B cell (primary cell): ENCODE measurements at regions of chr18 and their contacts with region 1.

Region 1: GRCh38 chr18:47748847-47749599 is 181.4 kb downstream of the SMAD2 start:
- DNase-seq: peak; percentile 85
- ATAC-seq: peak; percentile 98
- H3K4me3 ChIP-seq: peak overlapping the region in 3 of 5 experiments; percentile 8 to 35 (median 19)
- H3K4me3 Mint-ChIP-seq: peak overlapping the region; percentile 45
- H3K27ac ChIP-seq: no peak overlapping the region
- H3K27ac Mint-ChIP-seq: no peak overlapping the region
- H3K4me1 ChIP-seq: peaks cover 5 to 6% of the 10 kb centered on the region in 2 donors
- H3K4me1 Mint-ChIP-seq: peaks cover 4% of the 10 kb centered on the region
- H3K27me3 ChIP-seq: peaks cover 0 to 13% (median 6%) of the 10 kb centered on the region in 4 experiments
- H3K27me3 Mint-ChIP-seq: peaks cover 15% of the 10 kb centered on the region
- CTCF ChIP-seq: peak; percentile 100

Region 2: DNA sequence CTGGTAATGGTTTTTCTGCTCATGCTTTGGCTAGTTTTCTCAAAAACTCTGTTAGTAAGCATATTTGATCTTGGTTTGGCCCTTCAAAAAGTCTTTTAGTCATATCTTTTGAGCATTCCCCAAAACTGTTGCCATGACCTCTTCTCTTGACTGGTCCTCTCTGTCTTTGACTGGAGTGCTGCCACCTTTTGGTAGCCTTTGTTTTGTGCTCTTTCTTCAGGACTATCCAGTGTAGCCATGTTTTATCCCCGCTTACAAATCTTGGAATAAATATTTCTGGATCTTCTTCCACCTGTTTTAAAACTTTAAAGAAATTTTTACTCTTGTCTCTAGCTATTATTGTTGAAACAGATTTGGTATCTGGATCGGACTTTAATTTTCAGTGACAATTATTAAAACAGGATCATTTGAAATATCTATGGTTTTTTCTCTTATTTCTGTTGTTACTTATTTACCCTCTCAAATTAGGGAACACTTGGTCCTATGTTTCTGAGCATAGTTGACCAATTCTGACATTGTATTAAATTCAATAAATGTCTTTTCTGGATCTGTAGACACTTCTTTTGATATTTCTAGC is 712.6 kb before region 1 on chr18:
- CTCF ChIA-PET with region 1: no interaction called
- POLR2A ChIA-PET with region 1: no interaction called
- intact Hi-C with region 1: no loop called
- DNase-seq: no peak
- ATAC-seq: no peak
- H3K4me3 ChIP-seq: no peak overlapping the region
- H3K4me3 Mint-ChIP-seq: no peak overlapping the region
- H3K27ac ChIP-seq: no peak overlapping the region
- H3K27ac Mint-ChIP-seq: no peak overlapping the region
- H3K4me1 ChIP-seq: no peaks in the 10 kb centered on the region
- H3K4me1 Mint-ChIP-seq: peaks cover 3% of the 10 kb centered on the region
- H3K27me3 ChIP-seq: no peaks in the 10 kb centered on the region
- H3K27me3 Mint-ChIP-seq: peaks cover 10% of the 10 kb centered on the region
- CTCF ChIP-seq: no peak

Region 3: GRCh38 chr18:47100214-47100831 is 648.7 kb before region 1 on chr18:
- CTCF ChIA-PET with region 1: interaction called, 23 read pairs
- POLR2A ChIA-PET with region 1: no interaction called
- intact Hi-C with region 1: no loop called
- DNase-seq: peak; percentile 60
- ATAC-seq: peak; percentile 33
- H3K4me3 ChIP-seq: no peak overlapping the region
- H3K4me3 Mint-ChIP-seq: no peak overlapping the region
- H3K27ac ChIP-seq: no peak overlapping the region
- H3K27ac Mint-ChIP-seq: no peak overlapping the region
- H3K4me1 ChIP-seq: no peaks in the 10 kb centered on the region
- H3K4me1 Mint-ChIP-seq: peaks cover 4% of the 10 kb centered on the region
- H3K27me3 ChIP-seq: no peaks in the 10 kb centered on the region
- H3K27me3 Mint-ChIP-seq: no peaks in the 10 kb centered on the region
- CTCF ChIP-seq: peak; percentile 81

Region 4: DNA sequence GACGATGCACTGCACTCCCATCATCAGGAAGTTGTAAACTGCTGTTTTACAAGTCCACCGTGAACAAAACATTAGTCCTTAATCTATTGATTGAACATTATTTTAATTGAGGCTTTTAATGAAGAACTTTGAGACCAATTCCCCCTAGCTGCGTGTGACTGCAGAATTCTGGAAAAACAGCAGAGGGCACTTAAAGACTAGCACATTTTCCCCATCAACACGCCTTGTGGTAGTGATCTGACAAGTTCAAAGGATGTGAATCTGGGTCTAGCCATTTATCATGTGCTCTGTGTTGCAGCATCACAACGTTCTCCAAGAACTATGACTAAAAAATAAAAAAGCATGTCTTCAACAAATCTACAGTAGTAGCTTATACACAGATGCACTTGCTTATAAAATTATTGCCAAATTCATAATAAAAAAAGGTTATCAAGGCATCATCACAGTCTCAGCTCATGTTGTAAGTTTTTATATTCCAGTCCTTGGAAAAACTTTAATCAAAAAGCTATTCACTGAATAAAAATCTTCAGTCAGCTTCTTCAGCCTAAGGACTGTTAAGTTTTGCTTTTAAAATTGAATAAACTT is 533.4 kb before region 1 on chr18:
- CTCF ChIA-PET with region 1: interaction called, 28 read pairs
- POLR2A ChIA-PET with region 1: no interaction called
- intact Hi-C with region 1: no loop called
- DNase-seq: peak; percentile 19
- ATAC-seq: no peak
- H3K4me3 ChIP-seq: no peak overlapping the region
- H3K4me3 Mint-ChIP-seq: no peak overlapping the region
- H3K27ac ChIP-seq: no peak overlapping the region
- H3K27ac Mint-ChIP-seq: no peak overlapping the region
- H3K4me1 ChIP-seq: no peaks in the 10 kb centered on the region
- H3K4me1 Mint-ChIP-seq: no peaks in the 10 kb centered on the region
- H3K27me3 ChIP-seq: peaks cover 0 to 19% (median 4%) of the 10 kb centered on the region in 4 experiments
- H3K27me3 Mint-ChIP-seq: peaks cover 49% of the 10 kb centered on the region
- CTCF ChIP-seq: peak; percentile 57

Region 5: DNA sequence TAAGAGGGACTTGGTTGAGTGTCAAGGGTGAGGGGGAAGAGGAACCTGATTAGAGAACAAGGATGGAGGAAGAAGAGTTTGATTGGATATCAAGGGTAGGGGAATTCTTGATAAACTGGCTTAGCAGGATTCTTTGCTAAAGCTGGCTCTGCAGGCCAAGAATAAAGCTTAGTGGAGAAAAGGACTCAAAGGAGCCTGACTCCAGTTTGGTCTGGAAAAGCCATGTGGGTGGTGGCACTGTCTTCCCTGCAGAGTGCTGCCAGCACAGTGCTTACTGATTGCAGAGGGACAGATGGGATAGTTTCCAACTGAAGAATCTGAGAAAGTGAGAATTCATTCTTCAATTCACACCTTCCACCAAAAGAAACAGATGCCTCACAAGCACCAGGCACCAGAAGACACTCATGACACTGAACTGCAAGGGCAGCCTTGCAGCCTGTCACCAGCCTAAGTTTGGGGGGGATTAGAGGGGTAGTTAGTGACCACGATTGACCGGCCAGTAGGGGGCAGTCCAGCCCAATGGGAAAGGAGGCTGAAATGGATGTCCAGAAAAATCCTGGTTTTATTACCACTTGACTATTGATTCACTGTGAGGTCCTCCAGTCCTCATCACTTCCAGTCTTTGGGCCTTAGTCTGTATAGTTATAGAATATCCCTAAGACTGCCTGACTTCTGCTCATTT is 153.1 kb before region 1 on chr18:
- CTCF ChIA-PET with region 1: interaction called, 52 read pairs
- POLR2A ChIA-PET with region 1: no interaction called
- intact Hi-C with region 1: no loop called
- DNase-seq: peak; percentile 30
- ATAC-seq: no peak
- H3K4me3 ChIP-seq: no peak overlapping the region
- H3K4me3 Mint-ChIP-seq: no peak overlapping the region
- H3K27ac ChIP-seq: no peak overlapping the region
- H3K27ac Mint-ChIP-seq: no peak overlapping the region
- H3K4me1 ChIP-seq: no peaks in the 10 kb centered on the region
- H3K4me1 Mint-ChIP-seq: no peaks in the 10 kb centered on the region
- H3K27me3 ChIP-seq: peaks cover 0 to 26% (median 7%) of the 10 kb centered on the region in 4 experiments
- H3K27me3 Mint-ChIP-seq: peaks cover 43% of the 10 kb centered on the region
- CTCF ChIP-seq: peak; percentile 58

Region 6: GRCh38 chr18:47680488-47680887 is 68.5 kb before region 1 on chr18:
- CTCF ChIA-PET with region 1: interaction called, 9 read pairs
- POLR2A ChIA-PET with region 1: no interaction called
- intact Hi-C with region 1: loop called (anchors 2 kb)
- DNase-seq: peak; percentile 19
- ATAC-seq: peak; percentile 65
- H3K4me3 ChIP-seq: no peak overlapping the region
- H3K4me3 Mint-ChIP-seq: peak overlapping the region; percentile 56
- H3K27ac ChIP-seq: peak overlapping the region; percentile 65 to 66
- H3K27ac Mint-ChIP-seq: peak overlapping the region; percentile 78
- H3K4me1 ChIP-seq: peaks cover 29 to 65% of the 10 kb centered on the region in 2 donors
- H3K4me1 Mint-ChIP-seq: peaks cover 69% of the 10 kb centered on the region
- H3K27me3 ChIP-seq: no peaks in the 10 kb centered on the region
- H3K27me3 Mint-ChIP-seq: no peaks in the 10 kb centered on the region
- CTCF ChIP-seq: no peak

Region 7: DNA sequence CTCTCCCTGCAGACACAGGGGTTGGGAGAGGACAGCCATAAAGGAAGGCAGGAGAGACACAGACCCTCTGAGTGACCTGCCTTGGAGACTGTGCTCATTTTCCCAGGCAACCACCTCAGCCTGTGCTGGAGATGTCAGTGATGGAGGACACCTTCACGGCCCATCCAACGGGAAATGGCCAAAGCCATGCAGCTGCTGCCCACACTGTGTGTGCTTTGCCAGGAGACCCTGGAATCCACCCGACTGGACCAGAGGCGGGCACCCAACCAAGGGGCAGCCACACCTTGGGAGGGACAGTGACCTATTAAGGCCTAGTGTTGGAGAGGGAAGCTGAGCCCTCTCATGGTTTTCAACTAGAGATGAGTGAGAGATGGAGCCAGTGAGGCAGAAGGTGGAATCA is 11.1 kb before region 1 on chr18:
- CTCF ChIA-PET with region 1: interaction called, 16 read pairs
- POLR2A ChIA-PET with region 1: no interaction called
- intact Hi-C with region 1: no loop called
- DNase-seq: no peak
- ATAC-seq: no peak
- H3K4me3 ChIP-seq: no peak overlapping the region
- H3K4me3 Mint-ChIP-seq: no peak overlapping the region
- H3K27ac ChIP-seq: no peak overlapping the region
- H3K27ac Mint-ChIP-seq: no peak overlapping the region
- H3K4me1 ChIP-seq: no peaks in the 10 kb centered on the region
- H3K4me1 Mint-ChIP-seq: no peaks in the 10 kb centered on the region
- H3K27me3 ChIP-seq: peaks cover 0 to 23% (median 2%) of the 10 kb centered on the region in 4 experiments
- H3K27me3 Mint-ChIP-seq: peaks cover 36% of the 10 kb centered on the region
- CTCF ChIP-seq: no peak

Region 8: DNA sequence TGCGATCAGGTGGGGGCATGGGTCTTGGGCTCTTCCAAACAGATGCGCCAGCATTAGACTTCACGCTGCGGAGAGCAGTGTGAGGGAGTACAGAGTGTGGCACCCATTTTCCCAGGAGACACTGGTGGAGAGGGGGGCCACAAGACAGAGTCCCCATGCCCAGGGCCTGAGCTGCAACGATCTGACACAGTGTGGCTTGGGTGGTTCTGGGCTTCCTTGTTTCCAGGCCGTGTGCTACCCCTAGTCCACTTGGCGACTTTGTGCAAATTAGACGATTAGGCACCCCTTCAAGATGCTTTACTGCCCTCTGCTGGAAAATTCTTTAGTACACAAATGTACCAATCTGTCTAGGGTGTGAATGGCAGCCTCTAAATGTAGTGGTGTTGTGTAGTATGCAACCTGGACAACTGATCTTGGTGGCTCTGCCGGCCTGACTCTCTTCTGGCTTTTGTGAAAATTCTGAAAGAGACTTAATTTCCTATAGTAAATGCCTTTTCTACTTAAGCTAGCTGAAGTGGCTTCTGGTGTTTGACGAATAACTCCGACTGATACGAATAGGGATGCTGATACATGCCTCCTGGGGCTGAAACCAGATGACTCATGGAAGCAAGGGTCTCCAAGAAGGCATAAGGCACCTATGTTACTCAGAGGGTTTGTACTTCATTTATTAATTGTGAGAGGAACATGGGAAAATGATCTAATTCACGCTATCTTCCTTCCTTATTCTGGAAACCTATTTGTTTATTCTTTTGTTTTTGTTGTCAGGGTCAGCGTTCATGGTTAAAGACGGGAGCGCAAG is 273.7 kb after region 1 on chr18:
- CTCF ChIA-PET with region 1: no interaction called
- POLR2A ChIA-PET with region 1: no interaction called
- intact Hi-C with region 1: no loop called
- DNase-seq: peak; percentile 56
- ATAC-seq: peak; percentile 17
- H3K4me3 ChIP-seq: no peak overlapping the region
- H3K4me3 Mint-ChIP-seq: no peak overlapping the region
- H3K27ac ChIP-seq: no peak overlapping the region
- H3K27ac Mint-ChIP-seq: no peak overlapping the region
- H3K4me1 ChIP-seq: no peaks in the 10 kb centered on the region
- H3K4me1 Mint-ChIP-seq: no peaks in the 10 kb centered on the region
- H3K27me3 ChIP-seq: peaks cover 0 to 16% (median 7%) of the 10 kb centered on the region in 4 experiments
- H3K27me3 Mint-ChIP-seq: peaks cover 47% of the 10 kb centered on the region
- CTCF ChIP-seq: peak; percentile 55